ENCODE measurements at regions of chr15 and their contacts with region 1.

Region 1: DNA sequence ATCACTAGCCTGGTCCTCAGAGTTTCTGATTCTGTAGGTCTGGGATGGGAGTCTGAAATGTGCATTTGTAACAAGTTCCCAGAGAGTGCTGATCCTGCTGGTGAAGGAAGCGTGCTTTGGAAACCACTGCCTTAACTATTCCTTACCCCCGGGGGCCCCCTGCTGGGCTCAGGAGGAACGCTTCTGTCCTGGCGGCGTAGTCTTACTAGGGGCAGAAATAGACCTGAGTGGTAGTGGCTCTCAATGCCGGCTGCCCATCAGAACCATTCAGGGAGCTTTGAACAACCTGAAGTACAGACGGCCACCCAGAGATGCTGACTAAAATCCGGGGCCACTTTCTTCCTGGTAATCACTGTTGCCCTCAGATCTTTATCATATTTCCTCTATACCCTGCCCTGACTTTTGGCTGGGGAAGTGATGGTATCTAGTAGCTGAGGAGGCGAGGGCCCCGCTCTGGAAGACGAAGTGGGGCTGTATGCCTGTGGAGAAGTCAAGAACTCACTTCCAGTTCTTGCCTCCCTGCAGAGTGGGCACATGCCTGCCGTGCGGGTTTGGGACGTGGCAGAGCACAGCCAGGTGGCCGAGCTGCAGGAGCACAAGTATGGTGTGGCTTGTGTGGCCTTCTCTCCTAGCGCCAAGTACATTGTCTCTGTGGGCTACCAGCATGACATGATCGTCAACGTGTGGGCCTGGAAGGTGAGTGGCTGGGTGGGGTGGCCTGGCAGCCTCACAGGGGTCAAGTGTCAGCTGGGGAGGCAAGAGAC is 16.3 kb upstream of the JMJD7 start:
- DNase-seq: peak; percentile 76 to 90
- H3K4me3 ChIP-seq: no peak overlapping the region
- H3K4me1 ChIP-seq: no peaks in the 10 kb centered on the region
- H3K27me3 ChIP-seq: no peaks in the 10 kb centered on the region

Region 2: DNA sequence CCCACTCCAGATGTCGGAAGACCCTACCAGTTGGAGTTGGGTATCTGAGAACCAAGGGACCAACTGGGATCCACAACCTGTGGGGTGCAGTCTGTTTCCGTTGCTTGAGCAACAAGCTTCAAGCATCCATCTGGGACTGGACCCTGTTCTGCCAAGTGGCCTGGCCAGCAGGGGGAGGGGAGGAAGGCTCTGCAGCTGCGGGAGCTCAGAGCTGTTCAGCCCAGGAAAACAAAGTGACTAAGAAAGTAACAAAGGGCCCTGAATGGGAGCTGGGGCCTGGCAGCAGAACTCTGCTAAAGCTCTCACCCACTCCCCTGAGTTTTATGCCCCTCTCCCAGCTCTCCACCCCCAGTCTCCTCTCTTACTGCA is 249.9 kb before region 1 on chr15:
- in situ Hi-C with region 1: loop called (anchors 10 kb)
- DNase-seq: no peak
- H3K4me3 ChIP-seq: no peak overlapping the region
- H3K4me1 ChIP-seq: peaks cover 9% of the 10 kb centered on the region
- H3K27me3 ChIP-seq: no peaks in the 10 kb centered on the region

Region 3: GRCh38 chr15:41603941-41604911 is 207.4 kb before region 1 on chr15:
- in situ Hi-C with region 1: loop called (anchors 10 kb)
- DNase-seq: peak; percentile 61 to 81
- H3K4me3 ChIP-seq: no peak overlapping the region
- H3K4me1 ChIP-seq: no peaks in the 10 kb centered on the region; the same call in none of the 2 replicates
- H3K27me3 ChIP-seq: 0 out of 2 replicates have a peak, but pooled peaks cover 3% of the 10 kb centered on the region

Region 4: DNA sequence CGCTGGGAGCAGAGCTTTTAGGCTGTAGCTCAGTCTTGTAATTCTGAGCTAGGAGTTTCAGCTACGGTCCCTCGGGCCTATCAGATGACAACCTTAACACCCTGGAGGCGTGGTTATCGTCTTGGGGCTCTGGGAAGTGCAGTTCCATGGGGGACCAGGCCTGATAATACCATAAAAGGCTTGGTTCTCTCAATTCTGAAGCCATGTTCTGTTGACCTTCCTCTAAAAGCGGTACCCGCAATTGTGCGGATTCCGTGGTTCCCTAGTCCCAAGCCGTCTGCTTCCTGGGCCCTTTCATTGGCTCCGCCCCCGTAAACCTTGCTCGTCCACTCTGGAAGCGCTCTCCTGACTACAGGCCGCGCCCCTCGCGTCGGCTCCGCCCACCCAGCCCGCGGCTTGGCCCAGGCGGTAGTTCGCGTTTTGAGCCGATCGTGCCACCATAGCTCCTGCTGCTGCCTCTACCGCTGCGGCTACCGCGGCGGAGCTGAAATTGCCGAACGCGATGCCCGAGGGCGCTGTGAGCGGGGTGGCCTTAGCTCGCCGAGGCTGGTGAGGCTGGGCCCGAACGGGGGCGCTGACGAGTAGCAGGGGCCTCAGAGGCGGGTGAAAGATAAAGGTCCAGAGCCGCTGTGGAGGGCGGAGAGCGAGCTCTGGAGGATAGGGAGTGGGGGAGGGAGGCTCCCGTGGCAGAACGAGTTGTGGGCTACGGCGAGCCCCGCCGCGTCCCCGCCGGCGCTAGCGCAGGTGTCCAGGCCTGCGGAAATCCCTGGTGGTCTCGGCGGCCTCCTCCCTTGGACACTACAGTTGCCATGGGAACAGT is 37.3 kb before region 1 on chr15 and contains the start of gene MAPKBP1:
- in situ Hi-C with region 1: loop called (anchors 5 kb)
- DNase-seq: peak; percentile 95 to 99
- H3K4me3 ChIP-seq: peak within 1 kb of the TSS; percentile 60
- H3K4me1 ChIP-seq: peaks cover 31% of the 10 kb centered on the region
- H3K27me3 ChIP-seq: no peaks in the 10 kb centered on the region

Region 5: GRCh38 chr15:41967506-41968206 is 156.0 kb after region 1 on chr15:
- in situ Hi-C with region 1: no loop called
- DNase-seq: no peak
- H3K4me3 ChIP-seq: no peak overlapping the region
- H3K4me1 ChIP-seq: no peaks in the 10 kb centered on the region; the same call in 1 of the 2 replicates
- H3K27me3 ChIP-seq: no peaks in the 10 kb centered on the region